ENCODE measurements at regions of chr3 and their contacts with region 1.

Region 1: GRCh38 chr3:98817547-98818041 is 54.5 kb downstream of the ST3GAL6 start:
- DNase-seq: no peak
- H3K4me3 ChIP-seq: no peak overlapping the region
- H3K27ac ChIP-seq: peak overlapping the region in 1 of 4 donors; percentile 1
- H3K4me1 ChIP-seq: peaks cover 0 to 5% (median 4%) of the 10 kb centered on the region in 4 donors
- H3K27me3 ChIP-seq: no peaks in the 10 kb centered on the region
- CTCF ChIP-seq: peak; percentile 78 to 91 (median 82)
- EP300 ChIP-seq: no peak
- POLR2A ChIP-seq: no peak

Region 2: GRCh38 chr3:98602078-98602678 is 215.4 kb before region 1 on chr3:
- intact Hi-C with region 1: loop called (anchors 5 kb)
- DNase-seq: no peak
- H3K4me3 ChIP-seq: no peak overlapping the region
- H3K27ac ChIP-seq: no peak overlapping the region
- H3K4me1 ChIP-seq: no peaks in the 10 kb centered on the region
- H3K27me3 ChIP-seq: no peaks in the 10 kb centered on the region
- CTCF ChIP-seq: peak; percentile 46 to 67 (median 51)
- EP300 ChIP-seq: no peak
- POLR2A ChIP-seq: no peak

Region 3: DNA sequence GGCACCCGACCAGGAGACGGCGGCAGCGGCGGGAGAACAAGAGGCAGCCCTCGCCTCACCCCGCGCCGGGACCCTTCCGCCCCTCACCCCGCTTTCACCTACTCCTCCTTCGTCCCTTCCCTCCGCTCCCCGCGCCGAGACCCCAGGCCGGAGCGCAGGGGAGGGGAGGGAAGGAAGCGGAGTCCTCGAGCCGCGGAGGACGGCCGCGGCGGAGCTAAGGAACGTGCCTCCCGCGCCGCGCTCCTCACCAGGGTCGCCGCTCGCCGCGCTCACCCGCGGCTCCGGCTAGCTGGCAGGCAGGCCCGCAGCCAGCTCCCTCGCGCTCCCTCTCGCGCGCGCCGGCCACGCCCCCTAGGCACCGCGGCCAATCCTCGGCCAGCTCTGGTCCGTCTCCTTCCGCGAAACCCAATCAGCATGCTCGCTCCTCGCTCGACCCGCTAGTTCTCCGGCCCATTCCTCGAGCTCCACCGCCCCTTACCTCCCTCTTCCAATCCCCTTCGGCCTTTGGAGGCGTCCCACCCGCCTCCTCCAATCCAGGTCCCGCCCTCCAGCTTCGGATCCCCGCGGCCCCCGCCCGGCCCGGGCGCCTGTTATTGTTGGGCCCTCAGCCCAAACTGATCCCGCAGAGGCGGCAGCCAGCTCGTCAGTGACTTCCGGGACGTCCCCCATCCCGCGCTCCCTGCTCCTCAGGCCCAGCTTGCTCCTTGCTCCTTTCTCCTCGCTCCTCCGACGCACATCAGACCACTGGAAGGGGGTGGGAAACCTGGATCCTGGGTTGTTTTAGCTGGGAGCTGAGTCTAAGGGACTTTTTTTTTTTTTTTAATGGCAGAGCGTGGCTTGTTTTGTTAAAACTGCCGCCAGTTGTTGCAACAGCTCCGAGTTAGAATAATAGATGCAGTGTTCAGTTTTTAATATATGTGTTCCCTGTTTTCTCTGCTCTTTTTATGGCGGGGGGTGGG is 84.1 kb after region 1 on chr3 and contains the start of gene DCBLD2:
- intact Hi-C with region 1: loop called (anchors 5 kb)
- DNase-seq: peak; percentile 99
- H3K4me3 ChIP-seq: peak within 1 kb of the TSS; percentile 92 to 98 (median 93)
- H3K27ac ChIP-seq: peak within 1 kb of the TSS; percentile 93 to 97 (median 95)
- H3K4me1 ChIP-seq: peaks cover 10 to 40% (median 35%) of the 10 kb centered on the region in 4 donors
- H3K27me3 ChIP-seq: no peaks in the 10 kb centered on the region
- CTCF ChIP-seq: no peak
- EP300 ChIP-seq: no peak
- POLR2A ChIP-seq: peak; percentile 73
- total RNA-seq, gene DCBLD2: 37.3 to 48.4 (median 46.6) TPM

Region 4: GRCh38 chr3:98994128-98994762 is 176.7 kb after region 1 on chr3:
- intact Hi-C with region 1: loop called (anchors 1 kb)
- DNase-seq: no peak
- H3K4me3 ChIP-seq: no peak overlapping the region
- H3K27ac ChIP-seq: no peak overlapping the region
- H3K4me1 ChIP-seq: no peaks in the 10 kb centered on the region
- H3K27me3 ChIP-seq: no peaks in the 10 kb centered on the region
- CTCF ChIP-seq: peak; percentile 61 to 74 (median 68)
- EP300 ChIP-seq: no peak
- POLR2A ChIP-seq: no peak